Panc1 (cell line): ENCODE measurements at regions of chr1 and their contacts with region 1.

Region 1: DNA sequence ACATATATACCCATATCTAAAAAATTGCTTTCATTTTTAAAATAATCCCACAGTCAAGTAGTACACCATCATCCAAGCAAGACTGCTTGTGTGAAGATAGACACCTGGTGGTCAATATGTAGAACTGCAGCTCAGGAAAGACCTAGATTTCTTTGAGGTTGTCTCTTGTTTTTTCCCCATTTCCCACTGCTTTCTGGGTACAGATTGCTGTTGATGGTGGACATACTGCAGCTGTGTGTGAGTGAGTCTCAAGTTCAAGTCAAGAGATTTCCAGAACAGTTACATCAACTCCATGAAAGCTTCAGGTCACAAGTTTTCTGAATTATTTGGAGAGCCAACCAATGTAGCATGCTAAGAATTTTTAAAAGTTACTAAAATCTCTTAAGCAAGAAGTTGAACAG is 306.4 kb downstream of the DUSP10 start:
- DNase-seq: no peak
- ATAC-seq: no peak
- H3K4me3 ChIP-seq: no peak overlapping the region
- H3K27ac ChIP-seq: no peak overlapping the region
- H3K4me1 ChIP-seq: no peaks in the 10 kb centered on the region; the same call in 1 of the 2 replicates
- H3K27me3 ChIP-seq: no peaks in the 10 kb centered on the region
- CTCF ChIP-seq: peak; percentile 88

Region 2: GRCh38 chr1:220810179-220810653 is 625.3 kb before region 1 on chr1:
- CTCF ChIA-PET with region 1: no interaction called
- POLR2A ChIA-PET with region 1: no interaction called
- in situ Hi-C with region 1: no loop called
- intact Hi-C with region 1: loop called (anchors 2 kb)
- DNase-seq: peak; percentile 39
- ATAC-seq: peak; percentile 91
- H3K4me3 ChIP-seq: peak overlapping the region in 1 of 2 experiments; percentile 16; a peak in 1 of 4 replicates
- H3K27ac ChIP-seq: no peak overlapping the region
- H3K4me1 ChIP-seq: no peaks in the 10 kb centered on the region
- H3K27me3 ChIP-seq: no peaks in the 10 kb centered on the region; the same call in 1 of the 2 replicates
- CTCF ChIP-seq: peak; percentile 96

Region 3: DNA sequence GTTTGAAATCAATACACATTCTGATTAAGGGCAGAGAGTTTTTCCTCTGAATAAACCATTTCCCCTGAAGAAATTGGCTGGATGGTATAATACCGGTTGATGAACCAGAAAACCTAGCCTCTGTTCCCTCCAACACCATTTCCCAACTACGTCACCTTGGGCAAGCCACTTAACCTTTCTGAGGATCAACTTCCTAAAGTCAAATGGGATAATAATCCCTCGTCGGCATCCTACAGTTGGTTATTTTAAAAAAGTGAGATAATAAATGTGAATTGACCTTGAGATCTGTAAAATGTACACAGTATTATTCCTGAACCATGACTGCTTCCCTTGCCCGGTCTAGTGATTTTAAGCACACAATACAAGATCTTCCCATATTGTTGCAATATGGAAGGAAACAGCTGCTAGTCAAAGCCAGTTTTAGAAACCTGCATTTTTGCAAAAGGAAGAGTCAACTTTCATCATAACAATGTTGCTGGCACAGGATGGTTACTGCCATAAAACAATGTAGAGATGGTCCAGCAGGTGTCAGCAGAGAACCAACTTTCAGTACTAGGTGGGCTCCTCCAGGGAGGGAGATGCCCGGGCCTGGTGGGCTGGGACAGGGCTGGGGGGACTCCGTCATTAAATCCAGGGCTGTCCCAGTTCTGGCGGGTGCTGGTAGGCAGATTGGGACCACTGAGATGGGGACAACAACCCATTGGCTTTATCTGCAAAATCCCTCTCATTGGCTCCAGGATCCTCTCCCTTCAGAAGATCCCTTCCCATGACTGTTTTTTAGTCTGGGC is 561.4 kb before region 1 on chr1:
- CTCF ChIA-PET with region 1: interaction called, 4 read pairs
- POLR2A ChIA-PET with region 1: no interaction called
- in situ Hi-C with region 1: no loop called
- intact Hi-C with region 1: loop called (anchors 5 kb)
- DNase-seq: peak; percentile 42
- ATAC-seq: peak; percentile 67
- H3K4me3 ChIP-seq: no peak overlapping the region
- H3K27ac ChIP-seq: no peak overlapping the region
- H3K4me1 ChIP-seq: no peaks in the 10 kb centered on the region
- H3K27me3 ChIP-seq: peaks cover 4% of the 10 kb centered on the region
- CTCF ChIP-seq: peak; percentile 81

Region 4: DNA sequence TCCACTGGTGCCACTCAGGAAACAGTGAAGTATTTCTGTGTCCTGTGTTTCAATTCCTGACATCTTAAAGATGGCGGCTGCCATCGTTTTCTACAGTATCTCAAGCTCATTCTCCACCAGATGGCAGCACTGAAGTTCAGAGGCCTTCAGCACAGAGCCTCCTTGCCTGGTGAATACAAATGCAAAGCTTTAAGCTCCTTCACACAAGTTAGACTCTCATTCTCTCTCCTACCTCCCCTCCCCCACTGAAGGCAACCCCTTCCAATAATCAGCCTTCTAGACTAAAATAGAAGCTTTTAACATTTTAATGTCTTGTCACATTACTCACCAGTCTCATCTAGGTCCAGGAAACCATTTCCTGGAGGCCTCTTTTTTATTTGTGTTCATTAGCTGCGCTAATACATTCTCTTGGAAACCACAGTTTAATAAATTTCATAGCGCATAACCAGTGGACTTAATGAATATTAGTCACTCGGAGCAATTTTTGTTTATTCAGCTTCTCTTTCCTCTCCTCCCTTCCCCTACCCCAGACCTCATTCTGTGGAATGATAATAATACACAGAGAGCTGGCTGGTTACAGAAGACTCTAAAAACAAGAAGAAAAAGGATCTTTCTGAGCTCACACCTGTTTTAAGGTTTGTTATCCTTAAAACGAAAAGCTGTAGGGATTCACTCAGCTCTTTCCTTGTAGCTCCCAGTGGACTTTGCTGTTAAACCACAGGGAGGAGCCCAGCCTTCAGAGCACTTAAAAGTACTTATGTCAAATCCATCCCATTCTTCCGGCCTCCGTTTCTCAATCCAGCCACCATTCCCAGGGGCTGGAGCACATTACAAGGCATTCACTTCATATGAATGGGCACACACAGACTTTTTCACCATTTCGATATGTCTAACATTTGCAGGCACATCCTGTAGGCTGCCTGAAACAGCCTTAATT is 171.4 kb before region 1 on chr1:
- CTCF ChIA-PET with region 1: interaction called, 13 read pairs
- POLR2A ChIA-PET with region 1: no interaction called
- in situ Hi-C with region 1: no loop called
- intact Hi-C with region 1: loop called (anchors 5 kb)
- DNase-seq: peak; percentile 18
- ATAC-seq: peak; percentile 78
- H3K4me3 ChIP-seq: no peak overlapping the region
- H3K27ac ChIP-seq: no peak overlapping the region
- H3K4me1 ChIP-seq: no peaks in the 10 kb centered on the region
- H3K27me3 ChIP-seq: no peaks in the 10 kb centered on the region
- CTCF ChIP-seq: peak; percentile 66

Region 5: GRCh38 chr1:221381910-221382623 is 53.4 kb before region 1 on chr1:
- CTCF ChIA-PET with region 1: no interaction called
- POLR2A ChIA-PET with region 1: no interaction called
- in situ Hi-C with region 1: no loop called
- intact Hi-C with region 1: no loop called
- DNase-seq: no peak
- ATAC-seq: no peak
- H3K4me3 ChIP-seq: no peak overlapping the region
- H3K27ac ChIP-seq: no peak overlapping the region
- H3K4me1 ChIP-seq: no peaks in the 10 kb centered on the region
- H3K27me3 ChIP-seq: no peaks in the 10 kb centered on the region
- CTCF ChIP-seq: no peak

Region 6: DNA sequence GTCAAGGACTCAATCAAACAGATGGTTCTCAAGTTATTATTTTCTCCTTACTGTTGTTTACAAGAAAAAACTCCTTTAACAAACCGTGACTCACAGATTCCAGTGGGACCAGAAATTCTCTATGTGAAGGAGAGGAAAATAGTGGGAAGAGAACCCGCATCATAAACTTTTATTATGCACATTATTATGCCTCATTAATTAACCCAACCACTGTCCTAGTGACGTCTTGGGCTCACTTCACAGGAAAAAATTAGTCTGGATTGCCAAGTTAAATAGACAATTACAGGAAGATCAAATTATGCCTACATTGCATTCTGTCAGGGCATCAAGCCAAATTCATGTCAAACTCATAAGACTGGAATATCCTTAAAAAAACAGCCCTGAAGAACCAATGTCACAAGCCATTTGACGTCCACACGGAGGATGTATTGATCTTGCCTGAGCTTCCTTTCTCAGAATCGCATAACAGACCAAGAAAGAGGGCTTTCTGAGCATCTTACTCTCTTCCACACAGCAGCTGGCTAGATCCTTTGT is 41.4 kb before region 1 on chr1:
- CTCF ChIA-PET with region 1: no interaction called
- POLR2A ChIA-PET with region 1: no interaction called
- in situ Hi-C with region 1: no loop called
- intact Hi-C with region 1: no loop called
- DNase-seq: no peak
- ATAC-seq: no peak
- H3K4me3 ChIP-seq: no peak overlapping the region
- H3K27ac ChIP-seq: no peak overlapping the region
- H3K4me1 ChIP-seq: no peaks in the 10 kb centered on the region
- H3K27me3 ChIP-seq: no peaks in the 10 kb centered on the region
- CTCF ChIP-seq: no peak